Colonic mucosa (tissue), 4 donors: ENCODE measurements at regions of chr17 and their contacts with region 1.

Region 1: DNA sequence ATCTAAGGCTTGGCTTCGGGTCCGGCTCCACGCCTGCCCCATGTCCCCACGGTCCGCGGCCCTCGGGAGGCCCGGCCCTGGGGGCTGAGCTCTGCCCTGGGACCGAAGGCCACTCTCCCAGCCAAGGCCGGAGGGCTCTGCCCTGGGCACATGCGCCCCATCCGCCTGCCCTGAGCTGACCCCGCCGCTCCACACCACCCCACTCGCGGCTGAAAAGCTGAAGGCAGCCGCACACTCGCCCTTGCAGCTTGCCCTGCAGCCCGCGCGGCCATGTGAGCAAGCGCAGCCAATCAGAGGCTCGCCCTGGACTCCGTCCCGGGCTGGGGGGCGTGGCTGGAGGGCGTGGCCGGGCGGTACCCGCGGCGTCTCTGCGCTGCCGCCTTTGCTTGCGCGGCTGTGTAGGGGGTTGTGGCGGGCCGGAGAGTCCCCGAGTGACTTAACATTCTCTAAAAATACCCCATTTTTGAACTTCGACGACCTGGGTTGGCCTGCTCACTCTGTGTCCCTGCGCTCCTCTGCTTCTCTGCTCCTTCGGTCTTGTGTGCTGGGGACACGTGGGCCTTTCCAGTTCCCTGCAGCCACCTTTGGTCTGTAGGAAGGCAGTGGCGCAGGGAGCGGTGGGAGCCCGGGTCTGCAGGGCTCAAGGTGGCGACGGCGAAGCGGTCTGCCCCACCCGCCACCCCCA is 8.8 kb upstream of the MAP2K3 start:
- DNase-seq: peak; percentile 97
- H3K4me3 ChIP-seq: peak overlapping the region; percentile 71
- H3K27ac ChIP-seq: no peak overlapping the region
- H3K4me1 ChIP-seq: peaks cover 5% of the 10 kb centered on the region
- H3K27me3 ChIP-seq: no peaks in the 10 kb centered on the region
- CTCF ChIP-seq: no peak

Region 2: GRCh38 chr17:21124086-21124485 is 151.6 kb before region 1 on chr17:
- intact Hi-C with region 1: loop called (anchors 5 kb)
- DNase-seq: no peak
- H3K4me3 ChIP-seq: no peak overlapping the region
- H3K27ac ChIP-seq: no peak overlapping the region
- H3K4me1 ChIP-seq: peaks cover 4% of the 10 kb centered on the region
- H3K27me3 ChIP-seq: no peaks in the 10 kb centered on the region
- CTCF ChIP-seq: no peak

Region 3: DNA sequence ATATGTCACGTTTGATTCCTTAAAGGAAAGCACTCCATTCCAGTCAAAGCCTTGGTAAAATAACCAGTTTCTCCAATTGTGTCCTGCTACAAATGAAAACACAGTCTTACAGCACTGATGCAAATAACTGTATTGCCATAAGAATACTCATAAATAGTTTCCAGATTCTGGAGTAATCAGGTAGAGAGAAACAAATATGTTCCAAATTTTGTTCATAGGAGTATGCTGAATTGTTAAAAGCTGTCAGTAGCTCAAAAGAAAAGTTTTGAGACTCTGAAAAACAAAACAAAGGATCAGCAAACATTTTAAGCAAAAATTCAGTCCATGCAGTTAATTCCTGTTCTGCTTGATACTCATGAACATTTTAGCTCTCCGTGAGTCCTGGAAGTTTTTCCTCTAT is 141.2 kb before region 1 on chr17:
- intact Hi-C with region 1: no loop called
- DNase-seq: no peak
- H3K4me3 ChIP-seq: no peak overlapping the region
- H3K27ac ChIP-seq: no peak overlapping the region
- H3K4me1 ChIP-seq: no peaks in the 10 kb centered on the region
- H3K27me3 ChIP-seq: no peaks in the 10 kb centered on the region
- CTCF ChIP-seq: no peak

Region 4: GRCh38 chr17:21457051-21458026 is 181.6 kb after region 1 on chr17:
- intact Hi-C with region 1: loop called (anchors 5 kb)
- DNase-seq: peak; percentile 93
- H3K4me3 ChIP-seq: no peak overlapping the region
- H3K27ac ChIP-seq: no peak overlapping the region
- H3K4me1 ChIP-seq: no peaks in the 10 kb centered on the region
- H3K27me3 ChIP-seq: no peaks in the 10 kb centered on the region
- CTCF ChIP-seq: peak; percentile 97